Activated CD4-positive, alpha-beta T cell treated with anti-CD3 and anti-CD28 coated beads for 36 hours (primary cell): ENCODE measurements at regions of chr20 and their contacts with region 1.

Region 1: DNA sequence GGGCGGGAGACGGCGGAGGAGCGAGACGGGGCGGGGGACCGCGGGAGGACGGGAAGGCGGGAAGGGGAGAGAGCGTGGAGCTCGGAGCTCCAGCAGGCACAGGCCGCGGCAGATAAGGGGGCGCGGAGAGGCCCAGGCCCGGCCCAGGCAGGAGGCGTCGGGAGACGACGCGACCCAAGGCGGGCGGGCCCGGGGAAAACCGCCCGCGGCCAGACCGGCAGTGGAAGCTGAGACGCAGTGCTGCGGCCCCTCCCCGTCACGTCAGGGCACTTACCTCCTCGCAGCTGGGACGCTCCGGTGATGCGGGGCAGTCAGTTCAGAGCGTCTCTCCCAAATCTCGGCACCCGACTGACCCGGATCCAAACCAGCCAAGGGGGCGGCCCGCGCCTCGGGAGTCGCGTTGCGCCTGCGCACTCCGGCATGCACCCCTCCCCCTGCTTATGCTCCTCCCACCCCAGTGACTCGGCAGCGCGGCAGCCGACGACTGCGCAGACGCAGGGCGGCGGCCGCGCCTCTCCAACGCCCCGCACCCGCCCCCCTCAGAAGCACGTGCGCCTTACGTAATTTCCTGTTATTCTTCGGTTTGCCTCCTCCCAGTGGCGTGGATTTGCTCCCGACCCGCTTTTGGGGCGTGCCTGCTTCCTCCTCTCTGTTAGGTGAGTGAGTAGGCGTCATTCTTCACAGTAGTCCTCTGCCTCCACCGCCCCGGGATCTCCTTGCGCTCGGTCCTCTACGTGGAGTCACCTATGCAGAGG is at the start of gene OSER1:
- DNase-seq: peak; percentile 98
- ATAC-seq: peak; percentile 82
- H3K4me3 Mint-ChIP-seq: peak within 1 kb of the TSS; percentile 94
- H3K27ac Mint-ChIP-seq: peak within 1 kb of the TSS; percentile 92
- H3K4me1 Mint-ChIP-seq: peaks cover 48% of the 10 kb centered on the region
- H3K27me3 Mint-ChIP-seq: no peaks in the 10 kb centered on the region
- total RNA-seq, gene OSER1: 19.9 to 22.5 TPM

Region 2: GRCh38 chr20:43590392-43591323 is 619.9 kb before region 1 on chr20 and contains the start of gene IFT52:
- CTCF ChIA-PET with region 1: no interaction called
- POLR2A ChIA-PET with region 1: no interaction called
- intact Hi-C with region 1: loop called (anchors 1 to 5 kb)
- DNase-seq: peak; percentile 94
- ATAC-seq: peak; percentile 99
- H3K4me3 Mint-ChIP-seq: peak within 1 kb of the TSS; percentile 86
- H3K27ac Mint-ChIP-seq: peak within 1 kb of the TSS; percentile 96
- H3K4me1 Mint-ChIP-seq: peaks cover 12% of the 10 kb centered on the region
- H3K27me3 Mint-ChIP-seq: no peaks in the 10 kb centered on the region
- total RNA-seq, gene IFT52: 14.0 to 14.1 TPM

Region 3: GRCh38 chr20:43955062-43955749 is 255.4 kb before region 1 on chr20:
- CTCF ChIA-PET with region 1: no interaction called
- POLR2A ChIA-PET with region 1: no interaction called
- intact Hi-C with region 1: loop called in 1 of 2 experiments (anchors 10 kb)
- DNase-seq: peak; percentile 72
- ATAC-seq: peak; percentile 93
- H3K4me3 Mint-ChIP-seq: peak overlapping the region; percentile 8
- H3K27ac Mint-ChIP-seq: peak overlapping the region; percentile 71
- H3K4me1 Mint-ChIP-seq: peaks cover 76% of the 10 kb centered on the region
- H3K27me3 Mint-ChIP-seq: peaks cover 35% of the 10 kb centered on the region

Region 4: DNA sequence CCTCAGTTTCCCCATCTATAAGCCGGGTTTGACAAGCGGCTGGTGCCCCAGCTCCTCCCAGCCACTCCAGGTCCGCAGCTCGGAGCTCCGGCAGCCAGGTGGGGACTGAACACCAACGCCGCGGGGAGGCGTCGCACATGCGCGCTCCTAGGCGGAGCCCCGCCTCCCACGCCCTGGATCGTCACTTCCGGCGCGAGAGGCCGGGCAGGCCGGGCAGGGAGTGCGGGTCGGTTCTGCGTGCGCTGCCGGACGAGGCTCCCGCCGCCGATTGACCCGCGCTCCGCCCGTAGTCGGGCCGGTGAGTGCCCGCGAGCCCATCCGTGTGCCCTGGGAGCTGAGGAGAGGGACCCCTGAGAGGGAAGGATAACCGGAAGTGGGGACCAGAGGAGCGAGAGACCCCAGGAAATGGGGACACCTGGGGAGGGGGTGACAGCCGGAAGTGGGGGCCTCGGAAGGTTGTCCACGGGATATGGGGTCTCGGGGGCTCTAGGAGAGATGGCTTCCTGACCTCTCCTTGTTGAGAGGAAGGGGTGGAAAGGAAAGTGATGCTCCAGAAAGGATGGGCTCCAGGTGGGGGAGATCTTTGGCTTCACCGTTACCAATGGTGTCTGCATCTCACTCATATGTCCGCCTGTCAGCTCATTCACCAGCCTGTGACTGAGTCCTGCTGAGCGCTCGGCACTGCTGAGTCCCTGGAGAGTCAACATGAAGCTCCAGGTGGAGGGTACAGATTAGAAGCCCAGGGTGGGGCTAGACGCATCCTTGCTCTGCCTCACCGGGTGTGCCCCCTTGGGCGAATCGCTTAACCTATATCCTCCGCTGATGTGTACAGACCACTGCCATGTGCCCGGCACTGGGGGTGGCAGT is 265.3 kb after region 1 on chr20 and contains the start of gene TTPAL:
- CTCF ChIA-PET with region 1: no interaction called
- POLR2A ChIA-PET with region 1: no interaction called
- intact Hi-C with region 1: loop called (anchors 1 to 5 kb)
- DNase-seq: peak; percentile 96
- ATAC-seq: peak; percentile 97
- H3K4me3 Mint-ChIP-seq: peak within 1 kb of the TSS; percentile 91
- H3K27ac Mint-ChIP-seq: peak within 1 kb of the TSS; percentile 97
- H3K4me1 Mint-ChIP-seq: peaks cover 22% of the 10 kb centered on the region
- H3K27me3 Mint-ChIP-seq: no peaks in the 10 kb centered on the region
- total RNA-seq, gene TTPAL: 18.3 to 21.5 TPM

Region 5: GRCh38 chr20:44651684-44652423 is 441.3 kb after region 1 on chr20 and contains the start of gene ADA:
- CTCF ChIA-PET with region 1: interaction called, 3 read pairs
- POLR2A ChIA-PET with region 1: no interaction called
- intact Hi-C with region 1: loop called in 1 of 2 experiments (anchors 2 kb)
- DNase-seq: peak; percentile 65
- ATAC-seq: peak; percentile 48
- H3K4me3 Mint-ChIP-seq: peak within 1 kb of the TSS; percentile 78
- H3K27ac Mint-ChIP-seq: peak within 1 kb of the TSS; percentile 89
- H3K4me1 Mint-ChIP-seq: peaks cover 50% of the 10 kb centered on the region
- H3K27me3 Mint-ChIP-seq: no peaks in the 10 kb centered on the region
- total RNA-seq, gene ADA: 33.8 to 37.8 TPM

Region 6: GRCh38 chr20:44738813-44739477 is 528.3 kb after region 1 on chr20:
- CTCF ChIA-PET with region 1: no interaction called
- POLR2A ChIA-PET with region 1: no interaction called
- intact Hi-C with region 1: loop called (anchors 2 to 10 kb)
- DNase-seq: peak; percentile 75
- ATAC-seq: peak; percentile 80
- H3K4me3 Mint-ChIP-seq: peak overlapping the region; percentile 43
- H3K27ac Mint-ChIP-seq: peak overlapping the region; percentile 6
- H3K4me1 Mint-ChIP-seq: peaks cover 14% of the 10 kb centered on the region
- H3K27me3 Mint-ChIP-seq: no peaks in the 10 kb centered on the region

Region 7: DNA sequence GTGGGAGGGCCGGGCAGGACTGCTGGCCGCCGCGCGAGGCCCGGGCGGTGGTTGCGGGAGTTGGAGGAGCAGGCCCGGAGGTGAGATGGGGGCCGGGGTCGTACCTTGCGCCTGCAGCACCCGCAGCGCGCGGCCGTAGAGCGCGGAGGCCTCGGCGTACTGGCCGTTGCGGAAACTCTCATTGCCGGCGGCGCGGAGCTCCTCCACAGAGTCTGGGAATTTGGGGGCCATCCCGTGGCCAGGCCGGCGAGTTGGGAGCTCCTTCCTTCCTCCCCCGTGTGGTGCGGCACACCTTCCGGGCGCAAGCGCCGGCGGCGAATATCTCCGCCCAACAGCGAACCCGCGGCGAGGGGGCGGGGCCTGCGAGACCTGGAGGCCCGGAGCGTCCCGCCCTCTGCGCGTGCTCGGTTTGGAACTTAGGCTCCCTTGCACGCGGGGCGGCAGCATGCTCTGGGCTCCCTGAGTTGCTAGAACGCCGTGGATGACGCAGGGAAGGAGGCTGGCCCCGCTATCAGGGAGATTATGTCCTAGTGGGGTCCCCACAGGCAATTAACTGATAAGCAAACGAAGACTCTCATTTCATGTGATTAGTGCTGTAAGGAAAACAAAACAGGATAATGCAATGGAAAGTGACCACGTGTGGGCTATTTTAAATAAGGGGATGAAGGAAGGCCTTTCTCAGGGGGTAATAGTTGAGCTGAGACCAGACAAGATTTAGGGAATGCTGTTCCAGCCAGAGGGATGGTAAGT is 749.7 kb after region 1 on chr20 and contains the start of gene TOMM34:
- CTCF ChIA-PET with region 1: no interaction called
- POLR2A ChIA-PET with region 1: no interaction called
- intact Hi-C with region 1: loop called in 1 of 2 experiments (anchors 1 kb)
- DNase-seq: peak; percentile 98
- ATAC-seq: peak; percentile 91
- H3K4me3 Mint-ChIP-seq: peak within 1 kb of the TSS; percentile 94
- H3K27ac Mint-ChIP-seq: peak within 1 kb of the TSS; percentile 99
- H3K4me1 Mint-ChIP-seq: peaks cover 61% of the 10 kb centered on the region
- H3K27me3 Mint-ChIP-seq: no peaks in the 10 kb centered on the region
- total RNA-seq, gene TOMM34: 56.5 to 61.2 TPM